HAP-1 (cell line): ENCODE measurements at regions of chrX and their contacts with region 1.

Region 1: DNA sequence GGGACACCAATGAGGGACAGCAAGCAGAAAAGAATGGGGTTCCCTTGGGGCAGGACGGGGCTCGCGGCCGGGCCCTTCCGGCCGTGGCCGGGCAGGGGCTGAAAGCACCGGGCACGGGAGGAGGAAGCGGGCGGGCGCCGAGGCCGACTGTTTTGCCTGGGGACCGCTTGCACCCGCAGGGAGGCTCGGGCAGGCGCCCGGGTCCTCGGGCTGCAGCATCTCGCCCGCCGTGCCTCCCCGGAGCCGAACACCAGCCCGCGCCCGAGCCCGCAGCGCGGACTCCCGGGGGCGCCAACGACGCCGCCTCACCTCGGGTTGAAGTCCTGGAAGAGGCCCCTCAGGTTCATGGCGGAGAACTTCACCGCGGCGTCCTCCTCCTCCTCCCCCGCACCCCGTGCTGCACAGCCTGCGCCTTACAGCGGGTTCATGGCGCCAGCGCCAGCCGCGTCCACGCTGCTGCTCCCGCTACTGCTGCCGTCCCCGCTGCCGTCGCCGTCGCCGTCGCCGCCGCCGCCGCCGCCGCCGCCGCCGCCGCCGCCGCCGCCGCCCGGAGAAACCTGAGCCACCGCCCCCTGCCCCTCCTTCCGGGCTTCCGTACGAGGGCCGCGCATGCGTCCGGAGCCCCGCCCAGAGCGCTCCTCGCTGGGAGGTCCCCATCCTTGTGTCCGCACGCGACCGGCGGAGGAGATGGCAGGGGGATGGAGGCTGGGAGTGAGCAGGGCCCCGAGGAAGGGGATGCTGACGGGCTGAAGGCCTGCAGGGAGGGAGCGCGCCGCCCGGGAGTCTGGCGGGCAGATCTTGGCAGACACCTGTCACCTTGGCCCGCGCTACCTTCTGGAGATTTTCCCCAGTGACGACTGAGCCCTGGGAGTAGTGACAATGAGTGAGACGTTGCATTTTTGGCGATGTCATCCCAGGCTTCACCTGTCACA is at the start of gene TMEM185A:
- DNase-seq: peak; percentile 55 to 91
- H3K4me3 ChIP-seq: peak within 1 kb of the TSS; percentile 66
- H3K4me1 ChIP-seq: peaks cover 18% of the 10 kb centered on the region
- H3K27me3 ChIP-seq: no peaks in the 10 kb centered on the region

Region 2: GRCh38 chrX:149185087-149185486 is 446.4 kb before region 1 on chrX:
- in situ Hi-C with region 1: no loop called
- DNase-seq: no peak
- H3K4me3 ChIP-seq: no peak overlapping the region
- H3K4me1 ChIP-seq: no peaks in the 10 kb centered on the region
- H3K27me3 ChIP-seq: peaks cover 4% of the 10 kb centered on the region; the same call in 1 of the 2 replicates

Region 3: GRCh38 chrX:149398027-149398426 is 233.5 kb before region 1 on chrX:
- in situ Hi-C with region 1: no loop called
- DNase-seq: peak; percentile 25 to 35
- H3K4me3 ChIP-seq: no peak overlapping the region
- H3K4me1 ChIP-seq: no peaks in the 10 kb centered on the region
- H3K27me3 ChIP-seq: no peaks in the 10 kb centered on the region

Region 4: GRCh38 chrX:149504915-149505651 is 126.4 kb before region 1 on chrX and contains the start of gene IDS:
- in situ Hi-C with region 1: loop called (anchors 25 kb)
- DNase-seq: peak; percentile 92 to 96
- H3K4me3 ChIP-seq: peak within 1 kb of the TSS; percentile 61
- H3K4me1 ChIP-seq: peaks cover 10% of the 10 kb centered on the region; the same call in 1 of the 2 replicates
- H3K27me3 ChIP-seq: no peaks in the 10 kb centered on the region

Region 5: GRCh38 chrX:149762696-149763614 is 131.5 kb after region 1 on chrX:
- in situ Hi-C with region 1: no loop called
- DNase-seq: no peak
- H3K4me3 ChIP-seq: no peak overlapping the region
- H3K4me1 ChIP-seq: no peaks in the 10 kb centered on the region
- H3K27me3 ChIP-seq: peaks cover 4% of the 10 kb centered on the region; the same call in 1 of the 2 replicates

Region 6: DNA sequence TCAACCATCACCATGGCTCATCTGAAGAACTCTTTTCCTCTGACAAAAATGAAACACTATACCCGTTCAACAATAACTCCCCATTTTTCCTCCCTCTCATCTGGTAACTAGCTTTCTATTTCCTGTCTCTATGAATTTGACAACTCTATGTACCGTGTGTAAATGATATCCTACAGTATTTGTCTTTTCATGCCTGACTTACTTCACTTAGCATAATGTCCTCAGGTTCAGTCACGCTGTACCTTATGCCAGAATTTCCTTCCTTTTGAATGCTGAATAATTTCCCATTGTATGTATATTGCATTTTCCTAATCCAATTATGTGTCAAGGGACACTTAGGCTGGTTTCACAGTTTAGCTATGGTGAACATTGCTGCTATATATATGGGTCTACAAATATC is 168.4 kb after region 1 on chrX:
- in situ Hi-C with region 1: loop called (anchors 25 kb)
- DNase-seq: no peak
- H3K4me3 ChIP-seq: no peak overlapping the region
- H3K4me1 ChIP-seq: no peaks in the 10 kb centered on the region
- H3K27me3 ChIP-seq: peaks cover 6% of the 10 kb centered on the region; the same call in 1 of the 2 replicates

Region 7: DNA sequence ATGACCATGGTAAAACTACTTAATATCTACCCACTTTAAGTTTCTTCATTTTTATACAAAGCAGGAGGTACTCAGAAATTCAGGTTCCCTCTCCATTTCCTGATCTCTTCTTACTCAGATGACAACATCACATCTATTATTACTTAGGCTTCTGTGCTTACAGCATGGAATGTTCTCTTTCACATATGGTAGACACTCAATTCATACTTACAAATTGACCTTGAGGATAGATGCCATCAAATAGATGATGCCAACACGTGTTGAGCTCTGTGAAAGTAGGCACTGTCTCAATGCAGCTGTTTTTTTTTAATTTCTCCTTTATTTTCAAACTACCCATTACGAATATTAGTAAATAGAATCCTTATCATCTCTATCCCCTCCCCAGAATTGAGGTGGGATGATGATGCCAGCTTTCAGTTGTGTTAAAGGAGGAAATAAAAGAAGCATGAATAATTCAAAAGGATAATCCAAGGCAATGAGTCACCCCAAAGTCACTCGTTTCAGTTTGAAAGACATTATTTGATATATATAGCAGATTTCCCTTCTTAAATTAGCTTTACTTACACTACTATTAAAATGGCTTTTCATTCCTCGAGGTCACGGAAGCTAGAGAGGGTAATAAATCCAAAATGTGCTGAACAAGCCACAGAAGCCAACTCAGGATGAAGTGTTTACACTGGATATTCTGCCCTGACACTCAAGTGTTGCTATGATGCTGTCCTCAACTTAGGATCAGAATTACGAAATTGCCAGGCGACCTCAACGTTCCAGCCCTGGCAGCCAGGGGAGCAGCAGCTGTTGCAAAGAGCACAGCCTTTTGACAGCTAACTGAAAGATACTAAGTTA is 431.0 kb after region 1 on chrX:
- in situ Hi-C with region 1: no loop called
- DNase-seq: no peak
- H3K4me3 ChIP-seq: no peak overlapping the region
- H3K4me1 ChIP-seq: no peaks in the 10 kb centered on the region
- H3K27me3 ChIP-seq: 0 out of 2 replicates have a peak, but pooled peaks cover 2% of the 10 kb centered on the region